Heart left ventricle (tissue), 16 donors: ENCODE measurements at regions of chr1 and their contacts with region 1.

Region 1: DNA sequence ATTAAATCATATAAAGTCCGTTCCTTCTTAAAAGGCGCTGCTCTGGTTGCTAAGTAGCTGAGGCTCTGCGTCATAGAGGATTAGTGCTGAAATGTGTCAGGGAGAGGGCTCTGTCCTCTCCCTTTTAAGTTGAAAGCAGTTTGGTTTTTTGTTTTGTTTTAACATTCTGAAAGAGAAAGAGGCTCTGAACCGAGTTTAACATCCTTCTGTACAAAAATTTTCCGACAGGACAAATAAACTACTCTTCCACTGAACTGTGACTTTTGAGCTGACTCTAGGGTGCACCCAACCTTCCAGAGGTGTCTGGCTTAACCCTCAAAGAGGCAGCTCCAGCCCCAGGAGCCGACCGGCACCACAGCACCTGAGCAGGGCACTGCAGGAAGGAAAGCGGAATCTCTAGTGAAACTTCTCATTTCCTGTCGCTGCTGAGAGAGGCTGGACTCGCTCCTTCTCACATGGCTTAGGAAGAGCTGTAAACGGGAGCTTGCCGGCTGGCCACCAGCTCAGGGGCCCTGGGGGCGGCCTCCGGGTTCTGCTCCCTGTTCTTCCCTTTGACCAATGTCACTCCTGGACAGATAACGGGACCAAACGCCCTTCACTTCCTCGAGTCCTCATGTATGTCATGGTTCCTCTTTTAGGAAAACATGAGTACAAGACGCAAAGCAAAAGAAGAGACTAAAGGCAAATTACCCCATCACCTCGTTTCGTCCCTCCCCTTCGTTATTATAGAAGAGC is 1.2 kb downstream of the VAV3 start:
- DNase-seq: peak in 4 of 5 donors; percentile 29 to 62 (median 36)
- ATAC-seq: peak; percentile 30 to 64 (median 46)
- H3K4me3 ChIP-seq: peak overlapping the region; percentile 40 to 86 (median 64)
- H3K27ac ChIP-seq: peak overlapping the region; percentile 15 to 90 (median 54)
- H3K4me1 ChIP-seq: peaks cover 0 to 35% (median 12%) of the 10 kb centered on the region in 12 donors
- H3K27me3 ChIP-seq: peaks cover 0 to 5% (median 0%) of the 10 kb centered on the region in 9 donors
- CTCF ChIP-seq: no peak
- POLR2A ChIP-seq: no peak

Region 2: GRCh38 chr1:107529502-107530149 is 434.1 kb before region 1 on chr1:
- intact Hi-C with region 1: no loop called
- DNase-seq: no peak
- ATAC-seq: peak in 1 of 4 donors; percentile 49
- H3K4me3 ChIP-seq: no peak overlapping the region
- H3K27ac ChIP-seq: no peak overlapping the region
- H3K4me1 ChIP-seq: peaks cover 0 to under 1% (median 0%) of the 10 kb centered on the region in 12 donors
- H3K27me3 ChIP-seq: no peaks in the 10 kb centered on the region
- CTCF ChIP-seq: peak; percentile 21 to 66 (median 51)
- POLR2A ChIP-seq: no peak

Region 3: GRCh38 chr1:107782217-107782845 is 181.4 kb before region 1 on chr1:
- intact Hi-C with region 1: loop called in 6 of 10 experiments (anchors 2 to 5 kb)
- DNase-seq: peak in 2 of 5 donors; percentile 43
- ATAC-seq: peak in 3 of 4 donors; percentile 36 to 50 (median 49)
- H3K4me3 ChIP-seq: no peak overlapping the region
- H3K27ac ChIP-seq: no peak overlapping the region
- H3K4me1 ChIP-seq: peaks cover 0 to 34% (median 2%) of the 10 kb centered on the region in 12 donors
- H3K27me3 ChIP-seq: no peaks in the 10 kb centered on the region
- CTCF ChIP-seq: peak; percentile 65 to 85 (median 74)
- POLR2A ChIP-seq: no peak

Region 4: DNA sequence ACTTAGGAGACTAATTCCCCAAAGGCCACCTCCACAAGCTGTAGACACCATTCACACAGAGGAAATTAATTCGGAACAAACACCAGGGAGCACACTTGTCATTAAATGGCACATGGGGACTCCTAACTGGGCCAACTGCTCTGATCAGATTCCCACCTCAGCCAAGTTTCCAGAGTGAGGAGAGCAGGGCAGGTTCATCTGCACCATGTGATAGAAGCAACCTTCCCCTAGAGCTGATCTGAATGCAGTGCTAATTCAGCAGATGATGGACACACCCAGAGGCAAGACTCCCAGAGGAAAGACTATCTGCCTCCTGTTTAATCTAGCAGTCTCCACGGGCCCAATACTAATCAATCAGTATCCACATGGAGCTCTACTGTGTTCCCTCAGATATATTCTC is 145.8 kb before region 1 on chr1:
- intact Hi-C with region 1: loop called in 1 of 10 experiments (anchors 10 kb)
- DNase-seq: no peak
- ATAC-seq: peak in 2 of 4 donors; percentile 27 to 32
- H3K4me3 ChIP-seq: no peak overlapping the region
- H3K27ac ChIP-seq: no peak overlapping the region
- H3K4me1 ChIP-seq: peaks cover 0 to 10% (median 0%) of the 10 kb centered on the region in 12 donors
- H3K27me3 ChIP-seq: no peaks in the 10 kb centered on the region
- CTCF ChIP-seq: no peak
- POLR2A ChIP-seq: no peak

Region 5: DNA sequence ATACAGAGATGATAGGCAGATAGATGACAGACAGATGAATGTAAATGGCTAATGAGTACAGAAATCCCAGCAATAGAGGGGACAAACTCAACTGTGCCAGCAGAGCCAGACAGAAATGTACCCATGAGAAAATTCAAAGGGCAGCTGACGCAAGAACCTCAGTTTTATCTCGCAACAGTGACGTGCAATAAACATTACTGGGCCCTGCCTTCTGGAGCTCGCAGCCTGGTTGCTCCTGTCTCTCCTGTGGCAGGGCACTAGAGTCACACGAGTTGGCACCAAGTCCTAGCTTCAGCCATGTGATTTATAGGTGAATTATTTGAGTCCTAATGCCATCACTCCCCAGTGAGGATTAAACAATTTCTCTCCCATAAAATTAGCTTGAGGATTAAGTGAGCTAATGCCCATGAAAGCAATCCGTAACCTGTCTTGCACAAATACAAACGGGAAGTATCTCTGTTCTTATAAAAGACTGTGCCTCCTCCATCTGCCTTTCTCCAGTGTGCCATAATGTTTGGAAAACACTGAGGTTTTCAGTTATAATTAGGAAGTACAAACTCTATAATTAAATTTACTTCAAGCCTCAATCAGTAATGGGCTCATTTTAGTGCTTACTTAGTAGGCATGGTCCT is 49.5 kb before region 1 on chr1:
- intact Hi-C with region 1: no loop called
- DNase-seq: no peak
- ATAC-seq: no peak
- H3K4me3 ChIP-seq: no peak overlapping the region
- H3K27ac ChIP-seq: no peak overlapping the region
- H3K4me1 ChIP-seq: peaks cover 0 to 17% (median 0%) of the 10 kb centered on the region in 12 donors
- H3K27me3 ChIP-seq: no peaks in the 10 kb centered on the region
- CTCF ChIP-seq: no peak
- POLR2A ChIP-seq: no peak

Region 6: DNA sequence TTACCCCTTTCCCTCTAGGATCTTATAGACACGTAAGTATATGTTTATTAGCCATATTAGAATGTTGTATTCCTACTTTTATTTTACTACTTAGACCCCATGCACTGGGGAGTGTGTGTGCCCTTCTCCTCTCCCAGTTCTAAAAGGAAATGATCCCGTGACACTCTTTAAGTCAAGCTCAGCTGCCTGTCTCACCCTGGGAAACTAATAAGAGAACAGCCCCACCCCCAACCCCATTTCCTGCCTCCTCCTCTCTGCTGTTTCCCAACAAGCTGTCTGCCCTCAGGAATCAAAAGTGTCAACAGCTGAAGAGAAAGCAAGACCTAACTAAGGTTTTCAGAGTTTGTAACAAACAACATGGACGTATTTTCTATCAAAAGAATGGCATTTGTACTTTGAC is 93.8 kb after region 1 on chr1:
- intact Hi-C with region 1: loop called in 1 of 10 experiments (anchors 10 kb)
- DNase-seq: peak in 4 of 5 donors; percentile 53 to 66 (median 57)
- ATAC-seq: peak in 3 of 4 donors; percentile 61 to 73 (median 65)
- H3K4me3 ChIP-seq: no peak overlapping the region
- H3K27ac ChIP-seq: peak overlapping the region in 2 of 12 donors; percentile 9 to 76
- H3K4me1 ChIP-seq: peaks cover 0 to 69% (median 2%) of the 10 kb centered on the region in 12 donors
- H3K27me3 ChIP-seq: no peaks in the 10 kb centered on the region
- CTCF ChIP-seq: no peak
- POLR2A ChIP-seq: no peak

Region 7: GRCh38 chr1:108118018-108118902 is 154.5 kb after region 1 on chr1:
- intact Hi-C with region 1: loop called in 5 of 10 experiments (anchors 5 to 10 kb)
- DNase-seq: no peak
- ATAC-seq: peak in 3 of 4 donors; percentile 26 to 63 (median 61)
- H3K4me3 ChIP-seq: no peak overlapping the region
- H3K27ac ChIP-seq: peak overlapping the region in 1 of 12 donors; percentile 70
- H3K4me1 ChIP-seq: peaks cover 0 to 30% (median 8%) of the 10 kb centered on the region in 12 donors
- H3K27me3 ChIP-seq: no peaks in the 10 kb centered on the region
- CTCF ChIP-seq: no peak
- POLR2A ChIP-seq: no peak

Region 8: GRCh38 chr1:108125312-108126138 is 161.8 kb after region 1 on chr1:
- intact Hi-C with region 1: loop called in 5 of 10 experiments (anchors 5 to 10 kb)
- DNase-seq: peak in 4 of 5 donors; percentile 52 to 78 (median 66)
- ATAC-seq: peak; percentile 75 to 96 (median 92)
- H3K4me3 ChIP-seq: no peak overlapping the region
- H3K27ac ChIP-seq: no peak overlapping the region
- H3K4me1 ChIP-seq: peaks cover 0 to 19% (median 5%) of the 10 kb centered on the region in 12 donors
- H3K27me3 ChIP-seq: no peaks in the 10 kb centered on the region
- CTCF ChIP-seq: peak; percentile 87 to 97 (median 94)
- POLR2A ChIP-seq: no peak

Region 9: DNA sequence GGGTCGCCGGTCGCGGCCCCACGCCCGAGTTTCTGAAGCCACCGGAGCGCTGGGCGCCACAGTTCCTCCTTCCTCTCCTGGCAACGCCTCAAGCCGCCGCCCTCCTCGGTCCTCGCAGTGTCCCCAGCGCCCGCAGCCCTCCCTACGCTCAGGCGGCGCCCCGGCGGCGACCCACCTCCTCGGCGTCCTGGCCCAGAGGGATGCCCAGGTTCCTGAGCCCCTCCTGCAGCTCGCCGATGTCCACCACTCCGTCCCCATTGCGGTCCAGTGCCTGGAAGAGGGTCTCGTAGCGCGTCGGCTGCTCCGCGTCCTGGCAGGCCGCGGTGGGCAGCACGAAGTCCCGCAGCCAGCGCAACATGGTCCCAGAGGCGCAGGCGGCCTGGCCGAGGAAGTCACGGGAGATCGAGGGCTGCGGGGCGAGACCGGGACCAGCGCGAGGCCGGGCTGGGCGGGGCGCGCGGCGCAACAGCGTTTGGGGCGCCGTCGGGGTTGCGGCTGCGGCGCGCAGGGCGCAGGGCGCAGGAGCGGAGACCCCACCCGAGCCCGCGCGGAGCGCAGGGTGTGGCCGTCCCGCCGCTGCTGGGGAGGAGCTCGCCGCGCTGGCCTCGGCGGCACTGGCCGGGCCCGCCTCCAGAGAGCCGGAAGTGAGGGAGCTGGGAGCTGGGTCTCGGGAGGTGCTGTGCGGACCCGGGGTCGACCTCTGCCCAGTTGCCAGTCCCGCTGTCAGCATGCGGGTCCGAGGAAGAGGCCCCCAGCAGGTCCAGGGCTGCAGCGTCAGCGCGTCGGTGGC is 236.2 kb after region 1 on chr1 and contains the start of gene SLC25A24:
- intact Hi-C with region 1: no loop called
- DNase-seq: peak; percentile 88 to 94 (median 89)
- ATAC-seq: peak; percentile 89 to 99 (median 98)
- H3K4me3 ChIP-seq: peak within 1 kb of the TSS; percentile 77 to 98 (median 92)
- H3K27ac ChIP-seq: peak within 1 kb of the TSS; percentile 94 to 99 (median 96)
- H3K4me1 ChIP-seq: peaks cover 0 to 39% (median 20%) of the 10 kb centered on the region in 12 donors
- H3K27me3 ChIP-seq: no peaks in the 10 kb centered on the region
- CTCF ChIP-seq: no peak
- POLR2A ChIP-seq: peak in 1 of 2 donors; percentile 51
- total RNA-seq, gene SLC25A24: 10.3 to 24.0 (median 15.8) TPM